Activated CD8-positive, alpha-beta memory T cell treated with anti-CD3 and anti-CD28 coated beads, Interleukin-2, amount 10 ng/mL, durations not matched to agents 7 days and 5 days (primary cell): ENCODE measurements at regions of chr14 and their contacts with region 1.

Region 1: DNA sequence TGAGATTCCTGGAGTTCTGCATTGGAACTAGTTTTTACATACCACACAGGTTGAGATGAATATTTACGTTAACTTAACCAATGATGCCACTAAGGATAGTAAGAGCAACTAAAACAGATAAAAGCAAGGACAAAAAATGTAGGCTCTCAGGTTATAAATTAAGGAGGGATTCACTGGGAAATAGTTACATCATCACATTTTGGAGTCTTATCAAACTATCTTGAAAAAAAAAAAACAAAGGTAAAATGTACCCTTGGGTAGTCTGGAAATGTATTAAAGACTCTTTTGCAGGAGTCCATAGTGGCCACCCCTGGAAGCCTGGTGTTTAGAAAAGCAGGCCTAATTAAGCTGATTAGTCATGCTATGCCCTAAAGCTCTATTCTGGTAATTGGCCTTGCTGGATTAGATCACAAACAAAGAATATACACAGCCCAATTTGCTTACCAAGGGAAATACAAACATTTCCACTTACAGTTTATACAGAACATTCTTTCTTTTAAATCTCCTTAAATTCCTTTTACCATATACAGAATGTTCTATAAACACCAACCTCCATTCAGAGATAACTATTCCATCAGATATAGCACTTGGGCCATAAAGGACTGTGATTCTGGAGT is 39.3 kb downstream of the SLC25A47 start:
- DNase-seq: no peak
- ATAC-seq: no peak
- H3K4me3 Mint-ChIP-seq: no peak overlapping the region
- H3K27ac Mint-ChIP-seq: peak overlapping the region; percentile 9
- H3K4me1 Mint-ChIP-seq: peaks cover 56% of the 10 kb centered on the region
- H3K27me3 Mint-ChIP-seq: no peaks in the 10 kb centered on the region

Region 2: DNA sequence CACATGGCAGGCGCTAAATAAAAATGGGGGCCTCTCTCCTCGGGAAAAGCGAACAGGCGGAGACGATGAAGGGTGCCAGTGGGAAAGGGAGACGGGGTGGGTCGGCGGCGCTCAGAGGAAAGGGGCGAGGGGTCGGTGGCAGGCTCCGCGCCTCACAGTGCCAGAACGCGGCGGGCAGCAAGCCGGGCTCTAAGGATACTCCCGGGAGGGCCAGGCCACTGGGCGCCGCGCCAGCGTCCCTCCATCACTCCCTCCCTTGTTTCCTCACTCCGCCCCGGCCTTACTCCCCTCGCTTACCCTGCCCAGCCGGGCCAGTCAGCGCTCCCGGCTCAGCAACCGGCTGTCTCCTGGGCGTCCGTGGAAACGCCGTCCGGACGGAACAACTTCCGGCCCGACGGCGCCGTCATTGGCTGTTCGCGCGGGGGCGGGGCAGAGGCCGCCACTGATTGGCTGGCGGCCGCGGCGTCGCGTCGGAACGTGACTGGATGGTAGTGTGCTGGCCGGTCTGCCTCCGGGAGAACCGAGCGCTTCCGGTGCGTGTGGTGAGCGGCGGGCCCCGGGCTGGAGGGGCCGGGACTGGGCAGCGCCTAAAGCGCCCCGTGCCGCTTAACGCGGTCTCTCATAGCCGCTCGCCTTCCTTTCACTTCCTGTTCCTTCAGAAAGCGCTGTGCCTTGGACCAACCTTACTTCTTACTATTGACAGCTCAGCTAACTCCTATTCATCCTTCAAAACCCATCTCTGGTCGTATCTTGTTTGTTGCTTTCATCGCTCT is 13.7 kb after region 1 on chr14:
- CTCF ChIA-PET with region 1: interaction called, 13 read pairs
- DNase-seq: peak; percentile 95
- ATAC-seq: peak; percentile 84
- H3K4me3 Mint-ChIP-seq: peak within 1 kb of the TSS; percentile 85
- H3K27ac Mint-ChIP-seq: peak within 1 kb of the TSS; percentile 92
- H3K4me1 Mint-ChIP-seq: peaks cover 49% of the 10 kb centered on the region
- H3K27me3 Mint-ChIP-seq: no peaks in the 10 kb centered on the region

Region 3: DNA sequence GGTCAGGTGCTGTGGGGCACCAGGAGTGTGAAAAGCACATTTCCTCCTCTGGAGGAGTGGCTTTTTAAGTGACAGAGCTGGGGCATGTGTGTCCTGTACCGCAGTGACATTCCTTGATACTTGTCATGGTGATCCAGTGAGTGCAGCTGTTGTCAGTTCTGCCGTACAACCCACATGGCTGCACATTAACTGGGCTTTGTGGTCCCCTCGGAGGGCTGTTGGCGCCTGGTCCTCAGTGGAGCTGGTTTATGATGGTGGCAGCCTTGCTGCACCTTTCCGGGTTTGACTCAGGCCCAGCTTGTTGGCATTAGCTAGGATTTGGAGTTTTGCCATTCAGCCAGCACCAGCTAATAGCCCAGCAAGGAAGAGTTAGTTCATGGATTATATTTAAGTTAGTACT is 37.7 kb after region 1 on chr14:
- CTCF ChIA-PET with region 1: no interaction called
- DNase-seq: no peak
- ATAC-seq: no peak
- H3K4me3 Mint-ChIP-seq: no peak overlapping the region
- H3K27ac Mint-ChIP-seq: no peak overlapping the region
- H3K4me1 Mint-ChIP-seq: peaks cover 13% of the 10 kb centered on the region
- H3K27me3 Mint-ChIP-seq: no peaks in the 10 kb centered on the region

Region 4: DNA sequence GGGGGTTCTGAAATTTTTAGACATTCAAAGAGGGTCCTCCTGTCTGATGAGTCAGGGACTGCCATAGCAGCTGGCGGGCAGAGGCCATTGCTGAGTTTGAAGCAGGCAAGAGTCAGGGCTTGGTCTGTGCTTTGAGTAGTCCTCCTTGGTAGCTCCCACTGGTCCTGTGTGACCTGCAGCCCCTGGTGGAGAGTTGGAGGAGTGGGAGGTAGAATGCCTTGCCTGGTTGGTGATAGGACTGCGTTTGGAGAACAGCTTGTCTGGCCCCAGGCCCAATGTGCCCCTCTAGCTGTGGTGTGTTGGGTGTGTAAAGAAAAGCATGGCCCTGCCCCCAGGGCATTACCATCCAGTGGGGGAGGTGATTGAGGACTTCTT is 108.1 kb after region 1 on chr14:
- CTCF ChIA-PET with region 1: no interaction called
- DNase-seq: no peak
- ATAC-seq: no peak
- H3K4me3 Mint-ChIP-seq: no peak overlapping the region
- H3K27ac Mint-ChIP-seq: no peak overlapping the region
- H3K4me1 Mint-ChIP-seq: peaks cover 12% of the 10 kb centered on the region
- H3K27me3 Mint-ChIP-seq: no peaks in the 10 kb centered on the region

Region 5: DNA sequence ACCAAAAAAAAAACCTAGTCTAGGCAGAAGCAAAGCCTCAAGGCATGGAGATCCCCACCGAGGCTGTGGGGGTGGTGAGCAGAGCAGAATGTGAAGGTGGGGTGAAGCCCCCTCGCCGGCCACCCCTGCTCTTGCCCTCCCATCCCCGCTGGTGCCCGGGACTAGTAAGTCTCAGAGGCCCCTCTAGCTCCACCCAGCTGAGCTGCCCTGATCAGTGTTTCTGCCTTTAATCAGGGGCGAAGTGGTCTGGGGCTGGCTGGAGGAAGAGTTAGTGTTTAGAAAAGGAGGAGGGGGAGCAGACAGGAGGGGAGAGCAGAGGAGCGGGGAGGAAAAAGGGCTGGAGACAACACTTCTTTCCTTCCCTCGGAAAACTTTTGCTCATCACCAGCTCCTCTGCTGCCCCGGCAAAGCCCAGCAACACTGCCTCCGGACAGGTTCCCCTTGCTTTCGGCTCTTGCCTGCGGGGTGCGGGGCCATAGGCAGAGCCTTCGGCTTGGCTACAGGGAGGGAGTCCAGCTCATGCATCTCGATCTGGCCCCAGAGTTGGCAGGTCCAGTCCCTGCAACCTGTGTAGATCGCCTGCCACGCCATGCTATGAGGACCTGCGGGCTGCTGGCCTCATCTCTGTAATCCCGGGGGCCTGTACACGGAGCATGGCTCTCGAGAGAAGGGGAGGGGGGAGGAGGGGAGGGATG is 360.9 kb after region 1 on chr14:
- CTCF ChIA-PET with region 1: no interaction called
- DNase-seq: no peak
- ATAC-seq: no peak
- H3K4me3 Mint-ChIP-seq: no peak overlapping the region
- H3K27ac Mint-ChIP-seq: no peak overlapping the region
- H3K4me1 Mint-ChIP-seq: no peaks in the 10 kb centered on the region
- H3K27me3 Mint-ChIP-seq: peaks cover 29% of the 10 kb centered on the region